Panc1 (cell line): ENCODE measurements at regions of chr11 and their contacts with region 1.

Region 1: GRCh38 chr11:439315-440064 is 2.3 kb downstream of the ANO9 start:
- DNase-seq: no peak
- ATAC-seq: no peak
- H3K4me3 ChIP-seq: no peak overlapping the region
- H3K27ac ChIP-seq: no peak overlapping the region
- H3K4me1 ChIP-seq: peaks cover 21% of the 10 kb centered on the region
- H3K27me3 ChIP-seq: no peaks in the 10 kb centered on the region
- CTCF ChIP-seq: no peak

Region 2: DNA sequence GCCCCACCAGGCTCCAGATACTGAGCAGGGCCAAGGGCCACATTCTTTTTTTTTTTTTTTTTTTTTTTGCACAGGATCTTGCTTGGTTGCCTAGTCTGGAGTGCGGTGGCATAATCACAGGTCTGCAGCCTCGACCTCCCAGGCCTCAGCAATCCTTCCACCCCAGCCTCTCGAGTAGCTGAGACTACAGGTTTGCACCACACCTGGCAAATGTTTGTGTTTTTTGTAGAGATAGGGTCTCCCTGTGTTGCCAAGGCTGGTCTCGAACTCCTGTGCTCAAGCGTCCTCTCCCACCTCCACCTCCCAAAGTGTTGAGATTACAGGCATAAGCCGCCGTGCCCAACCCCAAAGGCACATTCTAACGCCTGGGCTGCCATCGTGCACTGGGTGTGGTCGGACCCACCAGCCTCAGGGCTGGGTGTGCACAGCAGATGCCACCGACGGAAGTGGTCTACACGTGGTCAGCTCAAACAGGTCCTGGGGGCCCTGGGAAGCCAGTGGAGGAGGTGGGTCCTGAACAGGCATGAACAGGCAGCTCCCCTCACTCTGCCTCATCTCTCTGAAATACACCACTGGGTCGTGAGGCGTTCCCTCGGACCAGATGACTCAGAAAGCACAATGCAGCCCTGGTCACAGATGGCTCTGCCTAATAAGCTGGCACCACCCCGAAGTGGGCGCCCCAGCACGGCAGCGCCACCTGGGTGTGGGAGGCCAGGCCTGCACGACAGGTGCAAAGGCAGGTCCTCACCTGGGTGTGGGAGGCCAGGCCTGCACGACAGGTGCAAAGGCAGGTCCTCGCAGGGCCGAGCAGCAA is 75.3 kb before region 1 on chr11:
- CTCF ChIA-PET with region 1: interaction called, 14 read pairs
- POLR2A ChIA-PET with region 1: no interaction called
- in situ Hi-C with region 1: no loop called
- intact Hi-C with region 1: no loop called
- DNase-seq: peak; percentile 38
- ATAC-seq: peak; percentile 62
- H3K4me3 ChIP-seq: no peak overlapping the region
- H3K27ac ChIP-seq: no peak overlapping the region
- H3K4me1 ChIP-seq: peaks cover 9% of the 10 kb centered on the region
- H3K27me3 ChIP-seq: no peaks in the 10 kb centered on the region
- CTCF ChIP-seq: peak; percentile 94